Lower leg skin (tissue), 4 donors: ENCODE measurements at regions of chr19 and their contacts with region 1.

Region 1: GRCh38 chr19:32224371-32225244 is 120.8 kb upstream of the ZNF507 start:
- DNase-seq: peak in 1 of 2 donors; percentile 84
- H3K4me3 ChIP-seq: no peak overlapping the region
- CTCF ChIP-seq: peak in 1 of 3 donors; percentile 69
- POLR2A ChIP-seq: no peak

Region 2: DNA sequence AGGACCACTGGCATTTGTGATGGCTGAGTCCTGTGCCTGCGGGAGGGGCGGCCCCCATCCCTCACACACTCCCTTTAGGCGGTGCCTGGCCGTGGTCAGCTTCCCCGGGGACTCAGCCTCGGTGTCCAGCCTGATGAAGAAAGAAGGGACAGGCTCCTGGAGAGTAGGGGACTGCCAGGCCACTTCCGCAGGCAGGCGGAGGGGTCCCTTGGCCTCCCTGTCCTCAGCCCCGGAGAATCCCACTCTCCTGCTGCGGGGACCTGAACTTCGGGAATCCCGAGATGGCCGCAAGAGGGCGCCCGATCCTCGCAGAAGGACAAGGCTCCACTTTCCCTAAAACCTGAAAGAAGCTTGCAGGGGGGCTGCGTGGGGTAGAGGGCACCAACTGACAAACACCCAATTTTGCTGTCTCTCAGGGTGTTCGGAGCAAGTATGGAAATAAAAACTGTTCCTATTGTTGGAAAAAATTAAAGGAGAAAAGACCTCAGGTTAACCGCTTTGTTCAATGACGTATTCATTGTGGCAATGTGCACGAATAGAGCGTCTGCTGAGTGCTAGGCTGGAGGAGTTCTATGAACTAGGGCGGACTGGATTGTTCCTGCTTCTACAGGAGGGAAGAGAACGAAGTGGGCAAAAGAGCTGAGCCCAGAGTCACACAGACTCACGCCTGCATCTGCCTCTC is 1555.1 kb before region 1 on chr19:
- intact Hi-C with region 1: loop called (anchors 5 kb)
- DNase-seq: peak; percentile 39 to 90
- H3K4me3 ChIP-seq: no peak overlapping the region
- CTCF ChIP-seq: peak in 1 of 3 donors; percentile 24
- POLR2A ChIP-seq: no peak

Region 3: DNA sequence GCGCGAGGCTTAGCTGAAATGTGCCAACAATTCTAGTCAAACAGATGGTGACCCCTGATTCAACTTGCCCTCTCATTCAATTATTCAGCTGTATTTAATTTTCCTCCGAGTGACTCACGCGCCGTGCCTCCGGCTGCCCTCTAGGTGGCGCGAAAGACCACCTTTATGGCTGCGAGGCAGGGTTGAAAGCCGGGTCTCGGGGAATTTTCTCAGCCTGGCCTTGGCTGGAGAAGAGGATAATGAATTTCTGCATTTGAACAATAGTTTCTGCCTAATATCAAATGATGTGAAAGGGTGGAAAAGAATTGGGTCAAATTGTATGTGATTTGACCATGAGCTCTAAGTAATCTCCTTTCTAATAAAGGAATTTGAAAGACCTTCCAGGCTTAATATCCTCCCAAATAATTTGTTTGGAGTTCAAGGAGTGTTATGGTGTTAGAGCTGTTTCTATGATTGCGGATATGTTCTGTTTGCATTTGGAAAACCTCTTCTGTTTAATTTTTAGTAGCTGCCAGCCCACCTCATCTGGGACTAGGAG is 1541.5 kb before region 1 on chr19:
- intact Hi-C with region 1: loop called (anchors 5 kb)
- DNase-seq: peak; percentile 78 to 95
- H3K4me3 ChIP-seq: no peak overlapping the region
- CTCF ChIP-seq: peak in 1 of 3 donors; percentile 65
- POLR2A ChIP-seq: no peak